CD8-positive, alpha-beta memory T cell (primary cell): ENCODE measurements at regions of chr7 and their contacts with region 1.

Region 1: GRCh38 chr7:155344600-155345433 is 47.1 kb downstream of the INSIG1 start:
- DNase-seq: peak; percentile 75 to 87 (median 78)
- H3K4me3 ChIP-seq: peak overlapping the region; percentile 41
- H3K4me3 Mint-ChIP-seq: peak overlapping the region in 6 of 7 donors; percentile 58 to 82 (median 69)
- H3K27ac ChIP-seq: no peak overlapping the region
- H3K27ac Mint-ChIP-seq: peak overlapping the region in 3 of 8 donors; percentile 47 to 52 (median 51)
- H3K4me1 ChIP-seq: peaks cover 4% of the 10 kb centered on the region
- H3K4me1 Mint-ChIP-seq: peaks cover 4 to 10% (median 6%) of the 10 kb centered on the region in 3 donors
- H3K27me3 ChIP-seq: peaks cover 4% of the 10 kb centered on the region
- H3K27me3 Mint-ChIP-seq: peaks cover 3 to 4% of the 10 kb centered on the region in 2 donors

Region 2: GRCh38 chr7:154927624-154928143 is 417.1 kb before region 1 on chr7:
- CTCF ChIA-PET with region 1: interaction called, 30 read pairs
- POLR2A ChIA-PET with region 1: no interaction called
- DNase-seq: peak; percentile 67 to 84 (median 71)
- H3K4me3 ChIP-seq: peak overlapping the region; percentile 85
- H3K4me3 Mint-ChIP-seq: peak overlapping the region; percentile 89 to 97 (median 95)
- H3K27ac ChIP-seq: peak overlapping the region; percentile 92
- H3K27ac Mint-ChIP-seq: peak overlapping the region; percentile 86 to 99 (median 98)
- H3K4me1 ChIP-seq: peaks cover 12% of the 10 kb centered on the region
- H3K4me1 Mint-ChIP-seq: peaks cover 29 to 40% (median 38%) of the 10 kb centered on the region in 3 donors
- H3K27me3 ChIP-seq: no peaks in the 10 kb centered on the region
- H3K27me3 Mint-ChIP-seq: peaks cover 2 to 6% of the 10 kb centered on the region in 2 donors

Region 3: DNA sequence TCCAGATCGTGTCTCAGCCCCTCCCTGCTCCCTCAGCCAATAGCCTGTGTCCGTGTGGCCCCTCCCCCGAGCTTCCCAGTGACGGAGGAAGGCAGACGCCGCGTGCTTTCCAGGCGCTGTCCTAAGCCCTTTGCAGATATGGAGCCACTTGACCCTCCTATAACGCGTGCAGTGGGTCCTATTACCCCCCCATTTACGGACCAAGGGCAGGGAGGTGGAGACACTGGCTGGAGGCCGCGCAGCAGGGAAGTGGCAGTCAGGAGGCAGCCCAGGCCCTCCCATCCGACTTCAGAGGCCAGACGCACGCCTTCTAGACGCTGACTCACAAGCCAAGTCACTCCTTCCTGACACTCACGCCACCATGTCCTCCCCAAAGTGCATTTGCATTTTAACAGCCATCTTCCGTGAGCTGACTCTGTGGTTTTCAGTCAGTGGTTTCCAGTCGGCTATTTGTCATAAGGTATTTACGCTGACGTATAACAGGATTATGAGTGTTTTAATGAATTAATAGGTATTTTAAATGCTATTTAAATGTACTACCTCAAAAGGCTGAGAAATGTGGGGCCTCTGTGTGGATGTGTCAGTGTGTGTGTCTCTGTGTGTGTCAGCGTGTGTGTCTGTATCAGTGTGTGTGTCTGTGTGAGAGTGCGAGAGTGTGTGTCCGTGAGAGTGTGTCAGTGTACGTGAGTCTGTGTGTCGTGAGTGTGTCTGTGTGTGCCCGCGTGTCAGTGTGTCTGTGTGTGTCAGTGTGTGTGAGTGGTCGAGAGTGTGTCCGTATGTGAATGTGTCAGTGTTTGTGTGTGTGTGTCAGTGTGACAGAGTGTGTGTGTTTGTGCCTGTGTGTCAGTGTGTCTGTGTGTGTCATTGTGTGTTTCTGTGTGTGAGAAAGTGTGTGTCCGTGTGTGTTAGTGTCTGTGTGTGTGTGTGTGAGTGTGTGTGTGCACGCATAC is 139.2 kb before region 1 on chr7:
- CTCF ChIA-PET with region 1: interaction called, 34 read pairs
- POLR2A ChIA-PET with region 1: no interaction called
- DNase-seq: peak; percentile 70 to 95 (median 81)
- H3K4me3 ChIP-seq: peak overlapping the region; percentile 70
- H3K4me3 Mint-ChIP-seq: peak overlapping the region; percentile 84 to 89 (median 87)
- H3K27ac ChIP-seq: peak overlapping the region; percentile 91
- H3K27ac Mint-ChIP-seq: peak overlapping the region; percentile 93 to 99 (median 96)
- H3K4me1 ChIP-seq: peaks cover 22% of the 10 kb centered on the region
- H3K4me1 Mint-ChIP-seq: peaks cover 16 to 22% (median 21%) of the 10 kb centered on the region in 3 donors
- H3K27me3 ChIP-seq: no peaks in the 10 kb centered on the region
- H3K27me3 Mint-ChIP-seq: no peaks in the 10 kb centered on the region

Region 4: DNA sequence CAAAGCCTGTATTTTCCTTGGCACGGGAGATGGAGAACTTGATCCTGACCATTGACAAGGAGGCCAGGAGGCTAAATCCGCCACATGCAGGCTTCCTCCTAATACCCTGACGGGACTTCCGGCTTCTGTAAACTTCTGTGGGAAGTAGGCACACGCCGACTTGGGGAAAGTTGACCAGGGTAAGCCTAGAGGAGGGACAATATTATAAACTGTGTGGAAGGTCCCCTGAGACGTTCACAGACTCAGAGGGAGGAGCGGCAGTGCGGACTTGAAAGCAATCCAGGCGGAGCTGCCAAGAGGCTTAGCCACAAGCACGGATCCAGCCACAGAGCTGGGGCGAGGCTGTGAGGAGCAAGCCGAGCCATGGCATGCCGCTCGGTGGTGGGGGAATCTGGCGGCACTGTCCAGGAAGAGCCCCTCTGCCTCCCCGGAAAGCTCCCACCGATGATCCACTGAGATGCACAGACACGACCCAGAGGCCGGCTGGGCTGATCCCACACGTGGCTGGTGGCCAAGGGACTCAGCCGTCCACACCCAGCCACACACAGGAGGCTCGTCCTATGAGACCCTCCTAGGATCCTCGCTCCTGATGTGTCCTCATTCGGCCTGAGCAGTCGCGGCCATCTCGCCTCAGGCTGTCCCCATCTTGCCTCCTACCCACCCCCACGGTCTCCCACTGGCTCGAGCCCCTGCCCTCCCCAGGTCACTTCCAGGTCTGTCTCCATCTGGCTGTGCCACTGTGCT is 87.2 kb before region 1 on chr7:
- CTCF ChIA-PET with region 1: interaction called, 11 read pairs
- POLR2A ChIA-PET with region 1: no interaction called
- DNase-seq: no peak
- H3K4me3 ChIP-seq: no peak overlapping the region
- H3K4me3 Mint-ChIP-seq: no peak overlapping the region
- H3K27ac ChIP-seq: no peak overlapping the region
- H3K27ac Mint-ChIP-seq: peak overlapping the region in 1 of 8 donors; percentile 81
- H3K4me1 ChIP-seq: no peaks in the 10 kb centered on the region
- H3K4me1 Mint-ChIP-seq: no peaks in the 10 kb centered on the region
- H3K27me3 ChIP-seq: peaks cover 5% of the 10 kb centered on the region
- H3K27me3 Mint-ChIP-seq: peaks cover 5 to 20% of the 10 kb centered on the region in 2 donors

Region 5: GRCh38 chr7:155298834-155299534 is 45.8 kb before region 1 on chr7:
- CTCF ChIA-PET with region 1: interaction called, 40 read pairs
- POLR2A ChIA-PET with region 1: interaction called, 7 read pairs
- DNase-seq: peak; percentile 92 to 98 (median 97)
- H3K4me3 ChIP-seq: peak overlapping the region; percentile 67
- H3K4me3 Mint-ChIP-seq: peak overlapping the region; percentile 88 to 97 (median 92)
- H3K27ac ChIP-seq: peak overlapping the region; percentile 92
- H3K27ac Mint-ChIP-seq: peak overlapping the region; percentile 96 to 100 (median 97)
- H3K4me1 ChIP-seq: peaks cover 38% of the 10 kb centered on the region
- H3K4me1 Mint-ChIP-seq: peaks cover 35 to 52% (median 39%) of the 10 kb centered on the region in 3 donors
- H3K27me3 ChIP-seq: no peaks in the 10 kb centered on the region
- H3K27me3 Mint-ChIP-seq: no peaks in the 10 kb centered on the region

Region 6: DNA sequence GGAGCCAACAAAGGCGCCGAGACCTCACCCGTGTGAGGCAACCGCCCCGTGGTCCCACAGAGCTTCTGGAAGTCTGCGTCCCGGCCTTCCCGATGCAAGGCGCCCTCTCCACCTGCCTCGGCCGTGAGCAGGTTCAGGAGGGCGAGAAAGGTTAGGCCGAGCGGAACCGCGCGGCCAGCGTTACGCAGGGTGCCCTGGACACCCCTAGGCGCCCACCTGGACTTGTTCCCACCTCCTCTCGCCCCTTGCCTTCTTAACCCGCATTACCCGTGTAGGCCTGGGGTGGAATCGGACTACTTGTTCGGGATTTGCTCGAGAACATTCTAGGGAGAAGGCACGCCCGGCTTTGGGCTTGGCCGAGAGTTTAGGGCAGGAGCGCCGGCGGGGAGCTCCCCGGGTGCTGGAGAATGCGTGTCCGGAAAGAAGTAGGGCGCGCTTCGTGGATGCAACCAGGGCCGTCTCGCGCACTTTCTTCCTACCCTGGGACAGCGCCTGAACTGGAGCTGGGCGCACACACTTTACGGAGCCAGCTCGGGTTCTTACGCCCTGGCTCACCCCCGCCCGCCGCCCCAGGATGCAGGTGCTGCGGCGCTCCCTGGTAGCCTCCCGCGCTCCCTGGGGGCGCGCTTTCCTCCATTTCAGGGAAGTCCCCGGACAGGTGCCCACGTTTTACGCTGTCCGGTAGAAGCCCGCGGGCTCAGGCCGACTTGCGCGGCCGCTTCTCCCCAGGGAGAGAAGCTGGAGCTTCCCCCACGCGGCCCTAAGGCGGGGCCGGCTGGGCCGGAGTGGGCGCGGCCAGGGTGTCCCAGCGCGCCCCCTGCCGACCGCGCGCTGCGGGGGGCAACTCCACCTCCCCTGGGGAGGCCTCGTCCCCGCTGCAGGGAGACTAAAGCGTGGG is 27.3 kb after region 1 on chr7:
- CTCF ChIA-PET with region 1: no interaction called
- POLR2A ChIA-PET with region 1: no interaction called
- DNase-seq: peak in 1 of 5 donors; percentile 38
- H3K4me3 ChIP-seq: no peak overlapping the region
- H3K4me3 Mint-ChIP-seq: peak overlapping the region in 1 of 7 donors; percentile 45
- H3K27ac ChIP-seq: no peak overlapping the region
- H3K27ac Mint-ChIP-seq: no peak overlapping the region
- H3K4me1 ChIP-seq: peaks cover 10% of the 10 kb centered on the region
- H3K4me1 Mint-ChIP-seq: peaks cover 25 to 39% (median 30%) of the 10 kb centered on the region in 3 donors
- H3K27me3 ChIP-seq: peaks cover 24% of the 10 kb centered on the region
- H3K27me3 Mint-ChIP-seq: peaks cover 44 to 66% of the 10 kb centered on the region in 2 donors